GM13977 (cell line): ENCODE measurements at regions of chr7 and their contacts with region 1.

Region 1: GRCh38 chr7:42931834-42932651 is at the starts of genes MRPL32 and PSMA2:
- DNase-seq: peak; percentile 90
- CTCF ChIP-seq: no peak

Region 2: DNA sequence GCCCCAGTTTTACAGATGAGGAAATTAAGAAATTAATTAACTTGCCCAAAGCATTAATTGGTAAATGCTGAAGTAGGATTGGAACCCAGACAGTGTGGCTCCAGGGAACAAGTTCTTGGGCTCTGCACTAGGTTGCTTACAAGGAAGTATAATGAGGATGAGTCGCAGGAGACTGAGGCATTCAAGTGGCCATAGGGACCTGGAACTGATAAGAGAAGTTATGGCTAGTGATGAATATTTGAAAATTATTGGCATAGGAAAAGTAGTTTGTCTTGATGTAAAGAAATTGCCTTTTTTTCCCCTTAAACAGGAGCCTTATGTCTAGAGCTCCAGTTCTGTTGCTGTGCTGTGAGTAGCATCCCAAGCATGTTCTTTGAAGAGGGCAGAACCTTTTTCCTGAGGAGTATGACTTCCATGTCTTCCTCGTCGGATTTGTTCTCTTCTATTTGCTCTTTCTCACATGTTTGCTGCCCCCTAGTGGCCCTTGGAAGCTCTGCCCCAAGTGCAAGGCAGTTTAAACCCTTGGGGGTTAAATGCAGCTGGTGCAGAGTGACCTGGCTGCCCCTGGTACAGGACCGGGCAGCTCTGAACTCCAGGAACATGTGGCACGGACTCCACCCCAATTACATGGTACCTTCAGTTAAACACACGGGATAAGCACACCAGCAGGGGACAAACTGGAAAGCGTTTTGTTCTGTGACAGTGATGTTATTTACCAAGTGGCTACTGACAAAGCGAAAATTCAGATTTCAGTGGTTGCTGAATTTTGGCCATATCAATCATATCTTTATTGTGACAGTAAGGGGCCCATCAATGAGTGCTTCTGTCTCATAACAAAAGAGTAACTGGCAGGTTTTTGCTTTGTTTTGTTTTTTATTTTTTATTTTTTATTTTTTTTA is 329.2 kb after region 1 on chr7:
- in situ Hi-C with region 1: loop called (anchors 25 kb)
- DNase-seq: peak; percentile 63
- CTCF ChIP-seq: peak; percentile 93

Region 3: DNA sequence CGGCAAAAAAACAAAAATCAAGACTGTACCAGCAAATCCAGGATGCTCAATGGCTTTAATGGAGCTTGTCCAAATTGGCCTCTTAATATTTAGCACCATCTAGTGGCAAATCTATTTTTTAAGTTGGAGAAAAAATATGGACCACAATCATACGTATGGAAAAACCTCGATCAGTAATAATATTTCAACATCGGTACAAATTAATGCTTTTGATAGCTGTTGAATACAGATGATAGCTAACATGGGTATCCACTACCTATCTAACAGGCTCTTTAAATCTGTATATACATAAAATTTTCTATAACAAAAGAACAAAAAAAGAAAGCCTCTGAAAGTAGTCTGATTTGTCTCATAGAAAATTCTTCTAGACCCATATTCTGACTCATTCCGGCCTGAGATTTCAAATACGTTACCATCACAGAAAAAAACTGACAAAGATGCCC is 768.0 kb after region 1 on chr7:
- in situ Hi-C with region 1: loop called (anchors 25 kb)
- DNase-seq: peak; percentile 31
- CTCF ChIP-seq: peak; percentile 51

Region 4: DNA sequence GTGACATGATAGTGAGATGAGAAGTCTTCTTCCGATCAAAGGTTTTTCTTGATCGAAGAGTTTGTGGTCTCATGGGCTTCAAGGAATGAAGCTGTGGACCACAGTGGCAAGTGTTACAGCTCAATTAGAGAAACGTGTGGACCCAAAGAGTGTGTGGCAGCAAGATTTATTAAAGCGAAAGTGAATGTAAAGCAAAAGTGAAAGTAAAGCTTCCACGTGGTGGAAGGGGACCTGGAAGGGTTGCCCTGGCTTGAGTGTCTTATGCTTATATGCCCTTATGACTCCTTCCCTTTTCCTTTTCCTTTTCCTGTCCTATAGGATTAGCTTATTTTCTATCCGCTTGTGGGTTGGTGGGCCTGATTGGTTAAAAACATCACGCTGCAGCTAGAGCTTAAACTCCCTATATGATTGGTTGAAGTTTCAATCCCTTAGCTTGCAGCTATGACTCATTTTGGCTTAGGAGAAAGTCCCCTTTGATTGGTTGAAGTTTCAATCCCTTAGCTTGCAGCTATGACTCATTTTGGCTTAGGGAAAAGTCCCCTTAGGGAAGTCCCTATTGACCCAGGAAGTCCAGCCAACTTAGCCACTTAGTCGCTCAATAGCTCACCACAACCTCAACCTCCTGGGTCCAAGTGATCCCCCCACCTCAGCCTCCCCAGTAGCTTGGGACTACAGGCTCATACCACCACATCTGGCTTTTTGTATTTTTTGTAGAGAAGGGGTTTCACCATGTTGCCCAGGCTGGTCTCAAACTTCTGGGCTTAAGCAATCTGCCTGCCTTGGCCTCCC is 902.6 kb after region 1 on chr7:
- in situ Hi-C with region 1: loop called (anchors 25 kb)
- DNase-seq: no peak
- CTCF ChIP-seq: no peak